Prostate gland (tissue), 2 donors: ENCODE measurements at regions of chr6 and their contacts with region 1.

Region 1: GRCh38 chr6:30212865-30213666 is at the start of gene TRIM26:
- DNase-seq: peak; percentile 99
- H3K4me3 ChIP-seq: peak within 1 kb of the TSS; percentile 56 to 87
- H3K27ac ChIP-seq: peak within 1 kb of the TSS; percentile 97 to 99
- H3K4me1 ChIP-seq: peaks cover 23% of the 10 kb centered on the region
- H3K27me3 ChIP-seq: no peaks in the 10 kb centered on the region
- CTCF ChIP-seq: no peak
- POLR2A ChIP-seq: peak; percentile 99
- total RNA-seq, gene TRIM26: 74.8 to 100 TPM

Region 2: GRCh38 chr6:29976588-29977424 is 236.3 kb before region 1 on chr6:
- intact Hi-C with region 1: no loop called
- DNase-seq: peak; percentile 81
- H3K4me3 ChIP-seq: peak overlapping the region; percentile 37 to 48
- H3K27ac ChIP-seq: peak overlapping the region; percentile 89 to 93
- H3K4me1 ChIP-seq: peaks cover 4% of the 10 kb centered on the region
- H3K27me3 ChIP-seq: no peaks in the 10 kb centered on the region
- CTCF ChIP-seq: peak in 2 of 4 experiments; percentile 38 to 50
- POLR2A ChIP-seq: peak; percentile 50

Region 3: GRCh38 chr6:30326526-30327260 is 113.6 kb after region 1 on chr6 and contains the start of gene TRIM39:
- intact Hi-C with region 1: loop called (anchors 5 kb)
- DNase-seq: peak; percentile 83
- H3K4me3 ChIP-seq: peak within 1 kb of the TSS; percentile 65 to 82
- H3K27ac ChIP-seq: peak within 1 kb of the TSS; percentile 94 to 95
- H3K4me1 ChIP-seq: no peaks in the 10 kb centered on the region
- H3K27me3 ChIP-seq: no peaks in the 10 kb centered on the region
- CTCF ChIP-seq: peak in 2 of 4 experiments; percentile 32 to 41
- POLR2A ChIP-seq: peak; percentile 65
- total RNA-seq, gene TRIM39: 15.2 to 27.7 TPM

Region 4: DNA sequence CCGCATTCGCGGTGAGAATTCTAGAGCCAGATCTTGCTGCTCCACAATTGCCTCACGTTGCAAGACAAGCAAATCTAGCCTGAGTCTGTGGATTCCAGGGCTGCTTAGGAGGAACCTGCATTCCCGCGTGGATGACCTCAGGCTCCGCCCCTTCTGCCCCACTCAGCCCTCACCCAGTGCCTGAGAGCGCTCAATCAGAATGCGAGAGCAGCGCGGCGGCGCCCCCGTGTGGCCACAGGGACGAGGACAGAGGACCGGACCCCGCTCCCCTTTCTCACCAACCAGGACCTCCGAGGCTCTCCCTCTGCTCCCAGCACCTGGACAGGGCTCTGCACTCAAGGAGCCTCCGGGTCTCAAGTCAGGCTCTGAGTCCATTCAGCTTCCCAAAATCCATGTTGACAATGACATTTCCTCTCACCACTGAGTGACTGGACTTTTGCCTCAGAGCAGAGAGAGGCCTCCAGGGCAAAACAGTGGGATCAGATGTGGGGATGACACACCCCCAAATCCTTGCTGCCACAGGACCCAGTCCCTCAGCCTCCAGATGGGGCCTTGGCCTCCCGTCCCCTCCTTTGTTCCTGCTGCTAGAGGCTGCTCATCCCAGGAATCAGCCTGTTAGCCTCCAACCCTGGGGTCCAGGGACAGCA is 183.9 kb after region 1 on chr6:
- intact Hi-C with region 1: loop called (anchors 10 kb)
- DNase-seq: peak; percentile 46
- H3K4me3 ChIP-seq: no peak overlapping the region
- H3K27ac ChIP-seq: no peak overlapping the region
- H3K4me1 ChIP-seq: no peaks in the 10 kb centered on the region
- H3K27me3 ChIP-seq: no peaks in the 10 kb centered on the region
- CTCF ChIP-seq: peak in 3 of 4 experiments; percentile 57 to 71 (median 64)
- POLR2A ChIP-seq: no peak